Heart right ventricle (tissue), 16 donors: ENCODE measurements at regions of chr2 and their contacts with region 1.

Region 1: DNA sequence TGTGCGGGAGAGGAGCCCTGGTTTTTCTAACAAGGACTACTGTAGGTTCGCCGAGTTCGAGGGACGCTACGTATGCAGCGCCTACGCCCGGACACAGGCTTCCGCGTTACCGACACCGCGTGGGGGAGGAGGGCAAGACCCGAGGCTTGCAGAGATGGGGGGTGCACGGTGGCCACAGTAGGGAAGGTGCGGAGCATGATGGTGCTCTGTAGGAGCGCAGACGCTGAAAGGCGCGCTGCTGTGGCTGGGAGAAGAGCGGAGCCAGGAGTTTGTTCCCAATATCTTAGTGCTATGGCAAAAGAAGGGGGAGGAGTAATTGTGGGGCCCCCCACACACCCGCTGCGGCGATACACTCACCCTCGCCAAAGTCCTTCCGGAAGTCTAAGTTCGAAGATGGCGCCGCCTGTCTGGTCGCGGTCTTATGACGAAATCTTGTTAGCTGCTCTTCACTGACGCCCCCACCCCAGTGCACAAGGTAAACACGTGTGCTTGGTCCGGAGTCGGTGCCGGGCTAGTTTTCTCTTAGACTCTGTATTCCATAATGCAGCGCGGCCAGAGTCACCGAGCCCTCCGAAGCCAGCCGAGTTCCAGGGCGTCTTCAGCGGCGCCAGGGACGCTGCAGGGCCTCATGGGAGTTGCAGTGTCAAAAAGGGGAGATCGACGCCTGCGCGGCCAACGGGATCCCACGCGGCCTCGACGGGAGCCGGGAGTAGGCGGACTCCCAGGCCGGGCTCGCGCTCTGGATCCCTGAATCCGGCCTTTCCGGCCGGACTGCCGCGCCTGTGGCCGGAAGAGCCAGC is at the start of gene GTF3C2:
- DNase-seq: peak; percentile 93 to 95
- ATAC-seq: peak; percentile 97 to 99 (median 98)
- H3K4me3 ChIP-seq: peak within 1 kb of the TSS; percentile 68 to 98 (median 85)
- H3K27ac ChIP-seq: peak within 1 kb of the TSS; percentile 83 to 97 (median 90)
- H3K4me1 ChIP-seq: peaks cover 0 to 47% (median 37%) of the 10 kb centered on the region in 9 donors
- H3K27me3 ChIP-seq: no peaks in the 10 kb centered on the region
- CTCF ChIP-seq: peak in 3 of 9 donors; percentile 12 to 17 (median 17)
- total RNA-seq, gene GTF3C2: 21.8 to 30.3 (median 23.6) TPM

Region 2: GRCh38 chr2:26043862-26044696 is 1312.5 kb before region 1 on chr2:
- intact Hi-C with region 1: no loop called
- DNase-seq: peak in 1 of 2 donors; percentile 24
- ATAC-seq: peak in 5 of 8 donors; percentile 16 to 70 (median 37)
- H3K4me3 ChIP-seq: peak overlapping the region in 1 of 10 donors; percentile 22
- H3K27ac ChIP-seq: peak overlapping the region in 3 of 10 donors; percentile 1 to 31 (median 18)
- H3K4me1 ChIP-seq: peaks cover 2 to 64% (median 35%) of the 10 kb centered on the region in 9 donors
- H3K27me3 ChIP-seq: no peaks in the 10 kb centered on the region
- CTCF ChIP-seq: no peak

Region 3: GRCh38 chr2:27133905-27134780 is 222.4 kb before region 1 on chr2 and contains the start of gene PREB:
- intact Hi-C with region 1: loop called in 1 of 10 experiments (anchors 5 kb)
- DNase-seq: peak; percentile 97 to 99
- ATAC-seq: peak; percentile 94 to 98 (median 98)
- H3K4me3 ChIP-seq: peak within 1 kb of the TSS; percentile 85 to 100 (median 94)
- H3K27ac ChIP-seq: peak within 1 kb of the TSS; percentile 75 to 96 (median 90)
- H3K4me1 ChIP-seq: peaks cover 5 to 19% (median 15%) of the 10 kb centered on the region in 9 donors
- H3K27me3 ChIP-seq: no peaks in the 10 kb centered on the region
- CTCF ChIP-seq: peak in 4 of 9 donors; percentile 5 to 36 (median 26)
- total RNA-seq, gene PREB: 41.6 to 57.2 (median 48.7) TPM

Region 4: DNA sequence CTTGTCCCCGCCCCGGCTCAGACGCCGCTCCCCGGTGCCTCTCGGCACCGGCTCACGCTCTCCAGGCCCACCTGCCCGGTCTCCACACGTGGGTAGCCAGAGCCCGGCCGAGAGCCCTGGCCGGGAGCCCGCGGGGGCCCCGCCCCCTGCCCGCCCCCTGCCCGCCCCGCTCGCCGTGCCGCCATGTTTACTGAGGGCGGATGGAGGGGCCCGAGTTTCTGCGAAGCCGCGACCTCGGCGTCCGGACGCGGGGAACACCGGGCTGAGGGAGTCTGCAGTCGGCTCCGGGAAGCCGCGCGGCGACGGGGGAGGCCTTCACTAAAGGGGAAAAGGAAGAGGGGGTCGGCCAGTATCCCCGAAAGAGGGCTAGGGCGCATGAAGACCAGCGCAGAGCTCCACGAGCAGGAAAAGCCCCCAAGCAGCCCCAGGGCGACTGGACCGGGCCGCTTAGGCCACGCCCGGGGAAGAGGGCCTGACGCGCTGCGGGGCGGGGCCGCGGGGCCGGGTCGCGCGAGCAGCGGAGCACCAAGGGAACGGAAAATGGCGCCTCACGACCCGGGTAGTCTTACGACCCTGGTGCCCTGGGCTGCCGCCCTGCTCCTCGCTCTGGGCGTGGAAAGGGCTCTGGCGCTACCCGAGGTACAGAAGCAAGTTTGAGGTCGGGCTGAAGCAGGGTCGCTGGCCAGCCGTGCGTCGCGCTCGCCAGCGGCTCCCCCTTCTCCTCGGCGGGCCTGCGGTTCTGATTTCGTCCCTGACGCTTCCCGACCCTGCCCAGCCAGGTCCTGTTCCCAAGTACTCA is 144.6 kb before region 1 on chr2 and contains the starts of genes ATRAID and SLC5A6:
- intact Hi-C with region 1: loop called in 3 of 10 experiments (anchors 5 to 10 kb)
- DNase-seq: peak; percentile 86 to 89
- ATAC-seq: peak; percentile 97 to 99 (median 98)
- H3K4me3 ChIP-seq: peak within 1 kb of the TSS; percentile 50 to 93 (median 77)
- H3K27ac ChIP-seq: peak within 1 kb of the TSS; percentile 89 to 99 (median 98)
- H3K4me1 ChIP-seq: peaks cover 7 to 29% (median 22%) of the 10 kb centered on the region in 9 donors
- H3K27me3 ChIP-seq: no peaks in the 10 kb centered on the region
- CTCF ChIP-seq: no peak
- total RNA-seq, gene ATRAID: 116 to 162 (median 129) TPM
- total RNA-seq, gene SLC5A6: 5.3 to 17.0 (median 8.8) TPM

Region 5: DNA sequence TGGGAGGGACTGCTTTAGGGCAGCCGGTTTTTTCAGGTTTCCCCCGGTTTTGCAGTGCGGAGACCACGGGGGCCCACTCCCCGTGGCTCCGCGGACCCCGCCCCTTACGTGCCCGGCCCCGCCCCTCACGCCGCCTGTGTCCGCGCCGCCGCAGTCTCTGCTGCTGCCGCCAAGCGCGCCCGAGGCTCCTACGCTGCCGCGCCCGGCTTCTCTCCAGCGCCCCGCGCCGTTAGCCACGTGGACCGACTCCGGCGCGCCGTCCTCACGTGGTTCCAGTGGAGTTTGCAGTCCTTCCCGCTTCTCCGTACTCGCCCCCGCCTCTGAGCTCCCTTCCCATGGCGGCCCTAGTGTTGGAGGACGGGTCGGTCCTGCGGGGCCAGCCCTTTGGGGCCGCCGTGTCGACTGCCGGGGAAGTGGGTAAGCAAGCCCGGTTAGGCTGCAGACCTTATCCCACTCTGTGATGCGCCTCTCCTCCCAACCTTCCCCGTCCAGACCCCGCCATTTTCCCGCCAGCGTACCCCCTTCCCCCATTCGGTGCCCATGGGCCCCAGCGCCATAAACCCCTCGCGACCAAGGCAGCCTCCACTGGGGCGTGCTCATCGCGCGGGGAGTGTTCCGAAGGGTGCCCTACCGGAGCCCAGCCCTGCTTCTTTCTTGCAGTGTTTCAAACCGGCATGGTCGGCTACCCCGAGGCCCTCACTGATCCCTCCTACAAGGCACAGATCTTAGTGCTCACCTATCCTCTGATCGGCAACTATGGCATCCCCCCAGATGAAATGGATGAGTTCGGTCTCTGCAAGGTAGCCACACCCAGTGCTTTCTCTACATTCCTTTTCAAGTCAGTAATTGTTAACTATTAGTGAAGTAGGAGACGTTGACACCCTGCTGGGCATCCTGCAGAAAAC is 139.1 kb before region 1 on chr2 and contains the start of gene CAD:
- intact Hi-C with region 1: loop called in 3 of 10 experiments (anchors 5 to 10 kb)
- DNase-seq: peak; percentile 80 to 87
- ATAC-seq: peak; percentile 87 to 96 (median 93)
- H3K4me3 ChIP-seq: peak within 1 kb of the TSS; percentile 50 to 78 (median 64)
- H3K27ac ChIP-seq: peak within 1 kb of the TSS in 9 of 10 donors; percentile 26 to 83 (median 63)
- H3K4me1 ChIP-seq: peaks cover 4 to 31% (median 26%) of the 10 kb centered on the region in 9 donors
- H3K27me3 ChIP-seq: no peaks in the 10 kb centered on the region
- CTCF ChIP-seq: peak in 5 of 9 donors; percentile 8 to 37 (median 35)
- total RNA-seq, gene CAD: 6.1 to 10.6 (median 7.2) TPM

Region 6: DNA sequence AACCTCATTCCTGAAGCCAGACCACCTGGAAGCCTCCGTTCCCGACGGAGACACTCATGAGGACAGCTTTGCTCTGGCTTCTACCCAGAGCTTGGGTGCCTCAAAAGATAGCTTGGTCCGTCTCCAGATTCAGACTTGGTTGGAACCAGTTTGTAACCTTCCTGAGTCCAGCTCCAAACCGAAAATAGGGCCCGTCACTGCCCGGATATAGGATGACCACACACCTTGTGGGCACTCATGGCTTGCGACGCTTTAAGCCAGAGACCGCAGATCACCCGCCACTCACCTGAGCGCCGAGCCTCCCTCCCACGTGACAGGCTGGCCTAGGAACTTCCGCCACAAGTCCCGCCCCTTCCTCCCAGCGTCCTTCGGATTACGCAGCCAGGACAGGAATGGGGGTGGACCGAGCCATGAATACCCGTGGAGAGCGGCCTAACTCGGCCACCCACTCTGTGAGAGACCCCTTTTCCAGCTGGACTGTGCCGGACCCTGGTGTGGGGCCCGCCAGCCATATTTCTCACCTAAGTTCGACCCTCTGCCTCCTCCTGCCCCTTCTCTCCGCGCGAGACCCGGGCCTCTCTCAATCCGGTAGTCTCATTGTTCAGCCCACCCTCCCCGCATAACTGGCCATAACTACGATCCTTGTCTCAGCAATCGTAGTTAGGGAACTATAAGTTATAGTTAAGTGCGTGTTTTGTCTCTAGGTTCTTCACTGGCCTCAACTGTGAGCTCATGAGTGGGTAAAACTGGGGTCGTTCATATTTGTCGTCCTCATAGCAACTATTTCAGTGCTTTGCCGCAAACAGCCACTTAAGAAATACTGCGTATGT is 33.6 kb before region 1 on chr2 and contains the start of gene MPV17:
- intact Hi-C with region 1: loop called in 4 of 10 experiments (anchors 2 to 5 kb)
- DNase-seq: peak; percentile 89 to 93
- ATAC-seq: peak; percentile 87 to 97 (median 94)
- H3K4me3 ChIP-seq: peak within 1 kb of the TSS; percentile 29 to 87 (median 76)
- H3K27ac ChIP-seq: peak within 1 kb of the TSS; percentile 78 to 98 (median 95)
- H3K4me1 ChIP-seq: peaks cover 6 to 41% (median 30%) of the 10 kb centered on the region in 9 donors
- H3K27me3 ChIP-seq: no peaks in the 10 kb centered on the region
- CTCF ChIP-seq: no peak
- total RNA-seq, gene MPV17: 40.8 to 84.9 (median 66.6) TPM

Region 7: DNA sequence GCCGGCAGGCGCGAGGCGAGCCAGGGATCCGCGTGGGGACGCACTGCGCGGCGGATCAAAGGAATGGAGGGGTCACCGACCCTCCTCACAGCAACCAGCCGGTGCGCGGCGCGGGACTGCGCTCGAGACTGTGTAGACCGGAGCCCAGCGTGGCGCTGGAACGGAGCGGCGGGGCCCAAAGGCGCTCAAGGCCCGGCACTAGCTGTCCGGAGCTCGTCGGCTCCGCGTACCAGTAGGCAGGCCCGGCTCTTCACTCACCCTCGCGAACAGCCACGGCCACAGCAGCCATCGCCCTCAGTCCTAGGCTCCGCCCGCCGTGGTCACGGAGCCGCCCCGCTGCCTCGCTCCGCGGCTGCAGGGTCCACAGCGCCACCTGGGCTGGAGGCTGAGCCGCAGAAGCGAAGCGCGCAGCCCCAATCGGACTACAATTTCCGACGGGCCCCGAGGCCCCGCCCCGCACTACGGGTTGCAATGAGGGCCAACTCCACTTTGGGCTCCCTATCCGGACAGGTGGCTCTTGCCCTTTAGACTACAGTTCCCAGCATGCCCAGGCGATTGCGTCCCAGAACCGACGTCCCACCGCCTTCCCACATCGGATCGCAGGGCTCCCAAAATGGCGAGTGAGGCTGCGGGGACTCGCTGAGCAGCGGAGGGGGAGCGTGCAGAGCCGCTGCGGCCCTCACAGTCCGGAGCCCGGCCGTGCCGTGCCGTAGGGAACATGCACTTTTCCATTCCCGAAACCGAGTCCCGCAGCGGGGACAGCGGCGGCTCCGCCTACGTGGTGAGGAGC is 13.6 kb after region 1 on chr2 and contains the starts of genes EIF2B4 and SNX17:
- intact Hi-C with region 1: loop called in 2 of 10 experiments (anchors 2 kb)
- DNase-seq: peak; percentile 99 to 100
- ATAC-seq: peak; percentile 94 to 97 (median 96)
- H3K4me3 ChIP-seq: peak within 1 kb of the TSS; percentile 54 to 99 (median 92)
- H3K27ac ChIP-seq: peak within 1 kb of the TSS; percentile 77 to 96 (median 93)
- H3K4me1 ChIP-seq: peaks cover 7 to 39% (median 32%) of the 10 kb centered on the region in 9 donors
- H3K27me3 ChIP-seq: no peaks in the 10 kb centered on the region
- CTCF ChIP-seq: peak; percentile 22 to 95 (median 75)
- total RNA-seq, gene EIF2B4: 26.4 to 47.9 (median 34.7) TPM
- total RNA-seq, gene SNX17: 54.5 to 82.5 (median 68.8) TPM